CD8-positive, alpha-beta memory T cell (primary cell): ENCODE measurements at regions of chr4 and their contacts with region 1.

Region 1: DNA sequence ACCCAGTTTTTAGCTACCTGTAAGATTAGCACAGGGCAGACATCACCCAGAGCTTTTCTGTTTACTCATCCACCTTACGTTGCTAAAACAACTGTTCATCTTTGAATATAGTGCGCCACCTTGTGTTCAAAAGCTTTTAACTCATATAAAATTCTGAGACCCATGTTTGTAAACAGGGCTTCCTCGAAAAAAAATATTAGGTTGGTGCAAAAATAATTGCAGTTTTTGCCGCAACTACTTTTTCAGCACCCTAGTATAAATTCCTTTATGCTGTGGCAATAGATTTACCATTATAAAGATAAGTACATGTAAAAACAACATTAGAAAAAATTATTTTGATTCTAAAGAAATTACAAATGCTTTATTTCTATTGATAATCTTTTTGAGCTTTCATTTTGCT is 147.9 kb downstream of the LRBA start:
- DNase-seq: peak in 2 of 5 donors; percentile 58 to 67
- H3K4me3 ChIP-seq: no peak overlapping the region
- H3K4me3 Mint-ChIP-seq: no peak overlapping the region
- H3K27ac ChIP-seq: no peak overlapping the region
- H3K27ac Mint-ChIP-seq: no peak overlapping the region
- H3K4me1 ChIP-seq: no peaks in the 10 kb centered on the region
- H3K4me1 Mint-ChIP-seq: peaks cover 0 to 4% (median 0%) of the 10 kb centered on the region in 3 donors
- H3K27me3 ChIP-seq: no peaks in the 10 kb centered on the region
- H3K27me3 Mint-ChIP-seq: peaks cover 0 to 2% of the 10 kb centered on the region in 2 donors

Region 2: GRCh38 chr4:150297861-150298474 is 569.2 kb before region 1 on chr4:
- CTCF ChIA-PET with region 1: interaction called, 18 read pairs
- POLR2A ChIA-PET with region 1: no interaction called
- DNase-seq: no peak
- H3K4me3 ChIP-seq: no peak overlapping the region
- H3K4me3 Mint-ChIP-seq: no peak overlapping the region
- H3K27ac ChIP-seq: no peak overlapping the region
- H3K27ac Mint-ChIP-seq: no peak overlapping the region
- H3K4me1 ChIP-seq: no peaks in the 10 kb centered on the region
- H3K4me1 Mint-ChIP-seq: peaks cover 0 to 3% (median 0%) of the 10 kb centered on the region in 3 donors
- H3K27me3 ChIP-seq: no peaks in the 10 kb centered on the region
- H3K27me3 Mint-ChIP-seq: no peaks in the 10 kb centered on the region

Region 3: DNA sequence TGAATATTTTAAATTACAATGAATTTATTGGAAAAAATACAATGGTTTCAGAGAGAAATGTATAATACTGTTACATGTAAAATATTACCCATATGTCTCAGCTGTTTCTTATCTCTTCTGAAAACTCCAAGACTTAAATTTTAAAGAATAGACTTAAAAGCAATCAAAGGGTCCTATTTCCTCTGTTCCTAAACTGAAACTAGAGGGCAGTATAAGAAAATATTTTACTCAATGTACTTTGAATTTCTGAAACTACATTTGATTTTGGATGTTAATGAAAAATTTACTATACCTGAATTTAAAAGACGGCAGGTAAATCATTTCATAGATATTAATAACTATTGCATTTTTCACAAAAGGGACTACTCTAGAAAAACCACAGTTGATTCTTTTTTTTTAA is 52.3 kb before region 1 on chr4:
- CTCF ChIA-PET with region 1: no interaction called
- POLR2A ChIA-PET with region 1: no interaction called
- DNase-seq: no peak
- H3K4me3 ChIP-seq: no peak overlapping the region
- H3K4me3 Mint-ChIP-seq: no peak overlapping the region
- H3K27ac ChIP-seq: no peak overlapping the region
- H3K27ac Mint-ChIP-seq: no peak overlapping the region
- H3K4me1 ChIP-seq: no peaks in the 10 kb centered on the region
- H3K4me1 Mint-ChIP-seq: peaks cover 12 to 33% (median 18%) of the 10 kb centered on the region in 3 donors
- H3K27me3 ChIP-seq: no peaks in the 10 kb centered on the region
- H3K27me3 Mint-ChIP-seq: no peaks in the 10 kb centered on the region

Region 4: DNA sequence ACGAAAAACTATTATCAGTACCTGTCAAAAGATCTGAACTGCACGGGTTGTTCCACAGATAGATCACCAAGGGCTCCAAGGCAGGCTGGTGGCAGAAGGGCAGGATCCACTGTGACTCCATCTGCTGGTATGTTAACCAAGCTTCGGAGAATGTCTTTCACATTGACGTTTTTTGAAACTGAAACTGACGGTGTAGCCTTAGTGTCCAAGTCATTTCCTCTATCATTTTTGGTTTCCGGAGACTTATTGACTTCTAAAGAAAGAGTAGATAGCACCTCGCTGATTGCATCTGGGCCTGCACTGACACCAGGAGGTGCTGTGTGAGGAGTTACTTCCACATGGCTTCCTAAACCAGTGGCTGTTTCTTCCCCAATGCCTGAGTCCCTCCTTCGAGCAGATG is 39.0 kb before region 1 on chr4:
- CTCF ChIA-PET with region 1: interaction called, 13 read pairs
- POLR2A ChIA-PET with region 1: interaction called, 3 read pairs
- DNase-seq: peak; percentile 1 to 79 (median 54)
- H3K4me3 ChIP-seq: peak overlapping the region; percentile 25
- H3K4me3 Mint-ChIP-seq: peak overlapping the region; percentile 82 to 93 (median 86)
- H3K27ac ChIP-seq: peak overlapping the region; percentile 41
- H3K27ac Mint-ChIP-seq: peak overlapping the region; percentile 69 to 98 (median 94)
- H3K4me1 ChIP-seq: no peaks in the 10 kb centered on the region
- H3K4me1 Mint-ChIP-seq: peaks cover 49 to 77% (median 68%) of the 10 kb centered on the region in 3 donors
- H3K27me3 ChIP-seq: no peaks in the 10 kb centered on the region
- H3K27me3 Mint-ChIP-seq: no peaks in the 10 kb centered on the region

Region 5: DNA sequence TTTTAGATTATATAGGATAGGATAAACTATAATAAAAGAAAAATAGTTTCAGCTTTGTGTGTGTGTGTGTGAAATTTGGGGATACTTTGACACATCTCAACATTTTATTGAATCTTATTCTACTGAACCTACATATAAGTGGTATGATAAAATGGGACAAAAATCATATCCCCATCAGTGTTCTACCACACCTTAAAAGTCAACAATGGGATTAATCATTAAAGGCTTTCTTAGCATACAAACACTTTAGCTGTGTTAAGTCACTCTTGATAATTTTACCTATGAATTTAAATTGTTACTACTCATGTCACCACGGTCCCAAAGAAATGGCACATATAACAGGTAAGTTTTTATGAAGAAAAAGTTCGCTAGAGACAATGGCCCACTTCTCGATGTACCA is 185.6 kb after region 1 on chr4:
- CTCF ChIA-PET with region 1: no interaction called
- POLR2A ChIA-PET with region 1: no interaction called
- DNase-seq: no peak
- H3K4me3 ChIP-seq: no peak overlapping the region
- H3K4me3 Mint-ChIP-seq: no peak overlapping the region
- H3K27ac ChIP-seq: no peak overlapping the region
- H3K27ac Mint-ChIP-seq: no peak overlapping the region
- H3K4me1 ChIP-seq: no peaks in the 10 kb centered on the region
- H3K4me1 Mint-ChIP-seq: no peaks in the 10 kb centered on the region
- H3K27me3 ChIP-seq: no peaks in the 10 kb centered on the region
- H3K27me3 Mint-ChIP-seq: peaks cover 0 to 5% of the 10 kb centered on the region in 2 donors